Activated T-helper 1 cell treated with anti-CD3 and anti-CD28 coated beads, Interleukin-12 subunit alpha, Interleukin-12 subunit beta, Interleukin-2, Interleukin-4 antibody, amounts not matched to agents 30 ng/mL and 10 ng/mL and 1 ng/mL, durations not matched to agents 14 hours and 24 hours and 36 hours (primary cell): ENCODE measurements at regions of chr5 and their contacts with region 1.

Region 1: DNA sequence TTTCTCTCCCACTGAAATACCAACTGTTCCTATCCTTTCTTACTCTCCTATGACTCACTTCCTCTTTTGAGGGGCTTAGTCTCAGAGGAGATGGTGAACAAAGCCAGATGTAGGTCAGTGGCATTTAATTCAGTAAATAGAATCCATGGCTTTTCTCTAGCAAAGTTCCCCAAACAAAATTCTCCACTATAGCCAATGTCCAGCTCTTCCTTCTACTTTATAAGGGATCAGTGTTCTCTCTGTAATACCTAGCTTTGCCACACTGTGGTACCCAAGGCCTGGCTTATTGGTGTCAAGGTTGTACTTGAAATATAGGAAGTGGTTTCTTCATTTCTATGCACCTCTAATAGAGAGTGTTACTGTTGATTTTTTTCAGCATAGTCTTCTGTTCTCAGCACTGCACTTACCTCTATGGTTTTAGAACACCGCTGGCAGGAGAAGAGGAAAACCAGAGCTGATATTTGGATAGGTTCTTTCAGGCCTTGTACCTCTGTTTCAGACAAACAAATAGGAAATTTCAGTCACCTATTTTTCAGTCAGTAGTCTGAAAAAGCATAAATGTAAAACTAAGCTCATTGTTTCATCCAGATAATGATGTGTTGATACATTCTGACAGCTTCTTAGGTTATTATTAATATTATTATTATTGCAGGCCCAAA is 40.6 kb upstream of the ITGA2 start:
- DNase-seq: peak; percentile 51
- H3K4me3 Mint-ChIP-seq: no peak overlapping the region
- H3K27ac Mint-ChIP-seq: no peak overlapping the region
- H3K4me1 Mint-ChIP-seq: peaks cover 31% of the 10 kb centered on the region
- H3K27me3 Mint-ChIP-seq: no peaks in the 10 kb centered on the region

Region 2: DNA sequence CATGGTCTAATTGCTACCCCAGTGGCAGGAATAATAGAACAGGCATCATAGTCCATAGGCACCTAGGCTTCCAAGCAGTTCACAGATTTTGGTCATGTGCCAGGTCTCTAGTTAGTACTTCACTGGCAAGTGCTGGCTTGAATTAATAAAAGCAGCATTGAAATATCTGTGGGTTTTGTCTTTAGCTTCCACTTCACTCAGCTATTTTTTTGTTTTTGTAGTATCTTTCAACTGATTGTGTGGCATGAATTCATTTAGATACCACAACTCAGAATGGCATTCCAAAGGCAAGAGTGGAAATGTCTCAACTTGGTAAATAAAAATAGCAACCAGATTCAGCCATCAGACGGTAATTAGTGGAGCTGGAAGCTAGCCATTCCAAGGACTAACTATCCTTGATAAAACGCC is 12.7 kb after region 1 on chr5:
- intact Hi-C with region 1: no loop called
- DNase-seq: no peak
- H3K4me3 Mint-ChIP-seq: no peak overlapping the region
- H3K27ac Mint-ChIP-seq: no peak overlapping the region
- H3K4me1 Mint-ChIP-seq: no peaks in the 10 kb centered on the region
- H3K27me3 Mint-ChIP-seq: peaks cover 15% of the 10 kb centered on the region

Region 3: DNA sequence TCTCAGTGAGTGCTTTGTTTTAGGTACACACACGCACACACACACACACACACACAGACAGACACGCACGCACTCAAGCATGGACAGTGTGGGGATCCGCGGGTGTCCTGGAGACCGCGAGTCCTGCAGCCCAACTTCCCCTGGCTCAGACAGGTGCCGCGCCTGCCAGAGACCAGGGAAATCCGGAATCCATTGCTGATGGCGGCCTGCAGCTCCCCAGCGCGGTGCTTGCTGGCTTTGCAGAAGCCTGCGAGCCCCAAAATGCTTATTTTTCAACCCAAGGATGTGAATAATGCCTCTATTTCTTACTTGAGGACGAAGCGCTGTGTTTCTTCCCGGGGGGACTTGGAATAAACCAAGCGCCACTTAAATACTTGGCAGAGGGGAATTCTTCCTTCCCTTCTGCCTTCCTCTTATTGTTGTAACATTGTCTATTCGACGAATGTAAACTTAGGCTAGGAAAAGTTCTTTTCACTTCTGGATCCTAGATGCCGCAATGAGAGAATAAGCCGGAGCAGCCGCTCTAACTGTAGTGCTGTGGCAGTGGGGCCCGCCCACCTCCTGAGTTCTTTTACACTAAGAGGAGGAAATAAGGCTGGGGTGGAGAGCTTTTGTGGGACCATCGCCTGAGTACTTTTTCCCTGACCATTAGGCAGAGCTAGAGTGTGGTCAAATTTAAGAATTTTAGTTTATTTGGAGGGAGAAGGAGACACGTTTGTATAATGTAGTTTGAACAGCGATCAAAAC is 41.4 kb after region 1 on chr5:
- intact Hi-C with region 1: loop called (anchors 1 kb)
- DNase-seq: peak; percentile 21
- H3K4me3 Mint-ChIP-seq: peak overlapping the region; percentile 83
- H3K27ac Mint-ChIP-seq: peak overlapping the region; percentile 45
- H3K4me1 Mint-ChIP-seq: peaks cover 34% of the 10 kb centered on the region
- H3K27me3 Mint-ChIP-seq: peaks cover 2% of the 10 kb centered on the region

Region 4: DNA sequence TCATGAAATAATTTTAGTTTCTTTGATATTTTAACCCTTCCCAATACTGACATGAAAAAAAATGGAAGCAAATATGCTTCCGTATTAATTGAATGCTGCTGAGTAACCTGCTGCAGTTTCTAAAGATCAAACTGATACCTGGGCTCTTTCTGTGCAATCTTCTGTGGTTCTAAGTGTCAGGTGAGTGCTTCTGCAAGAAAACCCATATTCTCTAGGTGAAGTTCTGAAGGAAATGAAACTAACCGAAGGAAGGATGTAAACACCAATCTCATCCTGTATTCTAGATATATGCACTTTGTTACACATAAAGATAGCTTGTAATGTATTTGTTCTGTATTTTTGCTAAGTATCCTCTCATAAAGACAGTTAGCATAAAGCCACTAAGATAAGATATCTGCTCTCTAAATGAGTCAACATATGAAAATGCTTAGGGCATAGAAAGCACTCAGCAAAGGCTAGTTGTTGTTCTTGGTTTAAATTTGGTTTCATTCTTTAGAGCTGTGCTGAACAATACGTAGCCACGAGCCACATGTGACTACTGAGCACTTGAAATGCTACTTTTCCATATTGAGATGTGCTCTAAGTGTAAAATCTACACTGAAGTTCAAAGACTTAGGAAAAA is 92.6 kb after region 1 on chr5:
- intact Hi-C with region 1: loop called (anchors 2 kb)
- DNase-seq: peak; percentile 22
- H3K4me3 Mint-ChIP-seq: peak overlapping the region; percentile 57
- H3K27ac Mint-ChIP-seq: peak overlapping the region; percentile 75
- H3K4me1 Mint-ChIP-seq: peaks cover 70% of the 10 kb centered on the region
- H3K27me3 Mint-ChIP-seq: no peaks in the 10 kb centered on the region

Region 5: GRCh38 chr5:53095931-53096525 is 147.5 kb after region 1 on chr5:
- intact Hi-C with region 1: loop called (anchors 1 kb)
- DNase-seq: peak; percentile 56
- H3K4me3 Mint-ChIP-seq: no peak overlapping the region
- H3K27ac Mint-ChIP-seq: no peak overlapping the region
- H3K4me1 Mint-ChIP-seq: peaks cover 17% of the 10 kb centered on the region
- H3K27me3 Mint-ChIP-seq: no peaks in the 10 kb centered on the region

Region 6: DNA sequence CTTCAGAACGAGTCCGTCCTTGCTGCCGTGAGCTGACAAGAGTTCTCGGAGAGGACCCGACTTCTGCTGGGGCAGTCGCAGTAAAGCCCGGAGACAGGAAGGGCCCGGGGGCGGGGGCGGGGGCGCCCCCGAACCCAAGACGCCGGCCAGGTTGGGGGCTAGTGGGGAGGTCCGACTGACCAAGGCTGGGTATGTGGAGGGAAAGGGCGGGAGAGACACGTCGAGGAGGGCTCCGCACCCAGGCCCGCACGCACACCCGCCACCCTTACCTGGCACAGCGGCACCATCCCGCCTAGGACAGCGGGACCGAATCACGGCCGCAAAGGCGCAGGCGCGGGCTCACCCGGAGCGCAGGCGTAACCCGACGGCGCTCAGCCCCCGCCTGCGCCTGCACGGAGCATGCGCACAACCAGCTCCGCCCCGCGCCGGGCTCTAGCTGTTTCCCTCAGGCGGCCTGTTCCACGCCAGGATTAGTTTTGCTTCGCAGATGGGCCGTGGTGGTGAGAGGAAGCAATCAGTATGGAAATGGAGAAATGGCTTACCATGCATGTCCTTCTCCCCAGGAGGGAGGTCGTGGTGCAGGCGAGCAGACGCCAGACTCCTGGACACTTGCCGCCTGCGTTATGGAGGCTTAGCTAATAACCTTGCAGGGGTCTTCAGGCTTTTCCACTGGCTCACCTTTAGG is 161.0 kb after region 1 on chr5 and contains the start of gene MOCS2:
- intact Hi-C with region 1: loop called (anchors 1 kb)
- DNase-seq: peak; percentile 86
- H3K4me3 Mint-ChIP-seq: peak within 1 kb of the TSS; percentile 91
- H3K27ac Mint-ChIP-seq: peak within 1 kb of the TSS; percentile 84
- H3K4me1 Mint-ChIP-seq: peaks cover 31% of the 10 kb centered on the region
- H3K27me3 Mint-ChIP-seq: no peaks in the 10 kb centered on the region
- total RNA-seq, gene MOCS2: 17.9 and 18.4 TPM in 2 replicates

Region 7: DNA sequence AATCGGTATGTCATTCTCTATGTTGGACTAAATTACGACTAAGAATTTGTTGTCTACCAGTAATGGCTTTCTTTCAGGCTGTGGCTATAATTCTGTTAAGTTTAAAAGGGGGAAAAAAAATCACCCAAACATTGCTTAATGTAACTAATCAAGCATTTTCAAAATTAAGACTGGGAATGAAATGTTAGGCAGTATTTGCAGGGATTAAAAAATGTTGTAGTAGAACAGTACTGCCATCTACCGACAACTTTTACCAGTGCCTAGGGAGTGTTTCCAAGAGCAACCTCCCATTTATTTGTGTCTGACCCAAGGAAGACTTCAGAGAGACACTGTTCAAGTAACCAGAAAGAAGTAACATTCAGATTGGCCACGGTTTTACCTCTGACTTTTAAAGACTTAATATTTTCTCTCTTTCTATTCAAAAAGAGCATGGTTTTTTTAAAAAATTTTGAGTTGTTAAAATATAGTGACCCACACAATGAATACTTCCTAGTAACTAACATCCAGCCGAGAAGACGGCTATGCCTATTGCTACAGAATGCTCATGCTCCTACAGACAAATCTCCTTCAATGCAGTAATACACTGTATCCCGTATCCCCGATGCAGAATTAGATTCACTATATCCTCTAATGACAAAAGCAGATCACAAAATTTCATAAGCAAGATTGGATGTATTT is 1269.4 kb after region 1 on chr5:
- intact Hi-C with region 1: loop called (anchors 5 kb)
- DNase-seq: no peak
- H3K4me3 Mint-ChIP-seq: no peak overlapping the region
- H3K27ac Mint-ChIP-seq: no peak overlapping the region
- H3K4me1 Mint-ChIP-seq: no peaks in the 10 kb centered on the region
- H3K27me3 Mint-ChIP-seq: no peaks in the 10 kb centered on the region